AG04449 (cell line): ENCODE measurements at regions of chr5 and their contacts with region 1.

Region 1: GRCh38 chr5:139690064-139690802 is 42.1 kb downstream of the CXXC5 start:
- DNase-seq: no peak
- H3K4me3 ChIP-seq: no peak overlapping the region
- CTCF ChIP-seq: peak; percentile 38

Region 2: DNA sequence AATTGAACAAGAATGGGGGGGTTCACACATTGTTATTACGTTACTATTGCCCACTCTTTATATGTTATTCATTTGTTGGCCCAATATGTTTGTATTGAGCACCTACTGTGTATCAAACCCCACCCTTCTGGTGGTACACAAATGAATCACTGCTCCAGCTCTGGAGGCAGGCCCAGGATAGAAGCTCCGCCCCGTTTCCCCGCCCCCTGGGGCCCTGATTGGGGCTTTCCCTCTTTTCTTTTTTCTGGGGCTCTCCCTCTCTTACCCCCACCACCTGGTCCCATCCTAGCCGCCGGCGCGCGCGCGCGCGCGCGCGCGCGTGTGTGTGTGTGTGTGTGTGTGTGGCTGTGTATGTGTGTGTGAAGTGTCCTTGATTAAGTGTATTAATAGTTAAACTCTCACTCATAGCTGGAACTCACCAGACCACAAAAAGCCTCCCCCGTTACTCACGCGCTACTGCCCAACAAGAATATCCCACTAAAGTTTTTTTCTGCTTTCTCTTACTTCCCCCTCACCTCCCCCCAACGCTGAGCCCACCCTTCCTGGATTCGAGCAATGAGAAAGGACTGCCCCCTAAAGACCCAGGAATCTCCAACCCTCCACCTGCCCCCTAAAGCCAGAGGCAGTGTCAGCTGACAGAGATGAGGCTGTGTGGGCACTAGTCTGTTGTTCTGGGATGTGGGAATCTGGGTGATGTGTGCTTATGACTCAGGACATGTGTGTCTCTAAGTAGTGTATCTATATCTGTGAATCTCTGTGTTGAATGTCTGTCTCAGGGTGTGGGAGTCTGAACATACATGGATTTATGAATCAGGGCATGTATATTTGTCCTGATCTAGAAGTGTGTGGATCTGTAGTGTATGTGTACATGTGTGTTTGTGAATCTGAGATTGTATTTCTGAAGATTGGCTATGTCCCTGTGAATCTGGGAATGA is 38.1 kb before region 1 on chr5:
- CTCF ChIA-PET with region 1: interaction called, 11 read pairs
- POLR2A ChIA-PET with region 1: interaction called, 5 read pairs
- DNase-seq: no peak
- H3K4me3 ChIP-seq: peak overlapping the region; percentile 85
- CTCF ChIP-seq: no peak

Region 3: DNA sequence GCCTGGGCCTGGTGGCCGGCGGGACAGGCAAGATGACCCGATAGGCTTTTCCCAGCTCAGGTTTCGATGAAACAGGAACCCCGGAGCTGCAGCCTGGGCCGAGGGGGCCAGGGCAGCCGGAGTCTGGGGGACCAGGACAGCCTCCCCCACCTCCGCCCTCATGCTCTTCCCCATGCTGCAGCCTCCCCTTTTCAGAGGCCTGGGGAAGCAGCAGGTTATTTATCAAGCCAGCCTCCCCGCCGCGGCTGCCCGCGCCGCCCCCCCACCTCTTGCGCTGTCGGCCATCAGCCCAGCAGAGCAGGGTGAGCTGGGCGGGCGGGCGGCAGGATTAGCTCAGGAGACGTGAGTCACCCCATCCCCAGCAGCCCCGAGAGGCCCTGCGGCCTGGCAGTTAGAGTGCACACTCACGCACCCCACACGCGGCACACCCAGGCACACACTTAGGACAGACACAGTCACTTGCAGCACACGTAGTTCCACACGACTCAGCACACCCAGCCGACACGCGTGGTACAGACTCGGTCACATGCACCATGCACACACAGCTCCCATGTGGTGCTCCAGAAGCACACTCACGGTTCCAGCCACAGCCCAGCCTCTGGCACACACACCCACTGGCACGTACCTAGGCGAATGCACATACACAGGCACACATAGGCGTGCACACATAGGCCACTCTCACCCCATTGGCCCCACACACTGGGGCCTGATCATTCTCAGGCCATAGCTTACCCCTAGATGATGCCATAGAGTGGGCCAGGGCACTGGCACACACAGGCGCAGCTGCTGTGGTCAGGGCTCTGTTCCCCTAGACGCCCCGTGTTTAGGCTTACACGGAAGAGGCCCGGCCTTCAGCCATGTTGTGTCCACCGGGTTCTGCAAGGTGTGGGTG is 29.1 kb before region 1 on chr5:
- CTCF ChIA-PET with region 1: interaction called, 17 read pairs
- POLR2A ChIA-PET with region 1: interaction called, 3 read pairs
- DNase-seq: no peak
- H3K4me3 ChIP-seq: peak overlapping the region; percentile 20
- CTCF ChIP-seq: no peak

Region 4: GRCh38 chr5:139670369-139671095 is 19.7 kb before region 1 on chr5:
- CTCF ChIA-PET with region 1: interaction called, 27 read pairs
- POLR2A ChIA-PET with region 1: interaction called, 14 read pairs
- DNase-seq: no peak
- H3K4me3 ChIP-seq: no peak overlapping the region
- CTCF ChIP-seq: peak; percentile 21

Region 5: DNA sequence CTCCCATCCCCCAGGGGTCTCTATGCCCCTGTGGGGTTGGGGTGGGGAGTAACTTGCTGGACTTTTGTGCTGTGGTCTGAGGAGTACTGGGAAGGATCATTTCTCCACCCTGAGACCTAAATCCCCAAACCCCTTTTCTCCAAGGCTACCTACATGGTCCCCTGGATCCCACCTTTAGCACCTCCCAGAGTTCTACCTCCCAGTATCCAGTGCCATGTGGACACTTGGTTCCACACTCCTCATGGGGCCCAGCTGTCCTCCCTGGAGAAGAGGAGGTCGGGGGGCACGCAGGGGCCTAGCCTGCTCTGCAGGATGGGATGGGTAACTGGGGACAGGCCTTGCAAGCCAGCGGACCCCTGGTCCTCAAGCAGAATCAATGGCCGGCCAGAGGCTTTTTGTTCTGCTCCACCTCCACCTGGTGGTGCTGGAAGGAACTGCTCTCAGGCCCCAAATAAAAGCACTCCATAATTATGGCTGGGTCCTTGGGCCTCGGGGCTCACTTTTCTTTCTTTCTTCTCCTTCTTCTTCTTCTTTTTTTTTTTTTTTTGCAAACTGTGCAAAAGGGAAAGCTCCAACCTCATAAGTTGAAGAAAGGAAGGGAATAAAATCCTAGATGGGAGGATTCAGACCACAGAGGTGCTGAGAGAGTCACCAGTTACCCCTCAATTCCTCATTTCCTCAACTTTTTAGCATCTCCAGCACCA is 173.8 kb after region 1 on chr5:
- CTCF ChIA-PET with region 1: no interaction called
- POLR2A ChIA-PET with region 1: no interaction called
- DNase-seq: no peak
- H3K4me3 ChIP-seq: no peak overlapping the region
- CTCF ChIP-seq: peak; percentile 72